Activated CD4-positive, alpha-beta T cell treated with anti-CD3 and anti-CD28 coated beads for 36 hours (primary cell): ENCODE measurements at regions of chrX and their contacts with region 1.

Region 1: DNA sequence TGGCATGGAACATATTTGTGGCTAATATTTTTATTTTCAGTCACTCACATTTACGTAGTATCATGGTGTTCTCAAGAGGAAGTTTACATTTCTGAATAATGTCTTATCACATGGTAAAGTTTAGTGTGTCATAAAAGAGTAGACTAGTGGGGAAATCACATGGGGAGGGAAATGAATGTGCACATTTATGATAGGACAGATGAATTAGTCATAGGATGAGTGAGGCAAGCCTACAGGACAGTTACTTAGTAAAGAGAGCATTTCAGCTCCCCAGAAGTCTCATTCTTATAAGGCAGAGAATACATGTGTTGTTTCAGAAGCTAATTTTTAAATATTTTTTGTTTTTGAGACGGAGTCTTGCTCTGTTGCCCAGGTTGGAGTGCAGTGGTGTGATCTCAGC is 6.2 kb downstream of the GK start:
- DNase-seq: no peak
- ATAC-seq: peak; percentile 77
- H3K4me3 Mint-ChIP-seq: peak overlapping the region; percentile 28
- H3K27ac Mint-ChIP-seq: peak overlapping the region; percentile 96
- H3K4me1 Mint-ChIP-seq: peaks cover 42% of the 10 kb centered on the region
- H3K27me3 Mint-ChIP-seq: no peaks in the 10 kb centered on the region

Region 2: DNA sequence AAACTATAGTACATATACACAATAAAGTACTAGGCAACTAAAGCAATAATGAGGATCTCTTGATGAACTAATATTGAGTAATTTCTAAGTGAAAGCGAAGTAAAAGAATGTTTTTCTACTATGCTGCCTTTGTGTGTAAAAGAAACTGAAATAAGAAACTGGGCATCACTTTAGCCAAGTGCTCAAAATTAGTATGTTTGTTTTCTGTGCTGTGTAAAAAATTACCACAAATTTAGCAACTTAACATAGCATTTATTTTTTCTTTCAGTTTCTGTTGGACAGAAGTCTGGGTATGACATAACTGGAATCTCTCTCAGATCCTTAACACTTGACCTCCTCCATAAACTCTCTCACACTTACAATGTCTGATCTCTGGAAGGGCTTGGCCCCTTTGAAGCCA is 1131.1 kb before region 1 on chrX:
- CTCF ChIA-PET with region 1: no interaction called
- POLR2A ChIA-PET with region 1: no interaction called
- intact Hi-C with region 1: no loop called
- DNase-seq: no peak
- ATAC-seq: no peak
- H3K4me3 Mint-ChIP-seq: no peak overlapping the region
- H3K27ac Mint-ChIP-seq: no peak overlapping the region
- H3K4me1 Mint-ChIP-seq: no peaks in the 10 kb centered on the region
- H3K27me3 Mint-ChIP-seq: no peaks in the 10 kb centered on the region

Region 3: DNA sequence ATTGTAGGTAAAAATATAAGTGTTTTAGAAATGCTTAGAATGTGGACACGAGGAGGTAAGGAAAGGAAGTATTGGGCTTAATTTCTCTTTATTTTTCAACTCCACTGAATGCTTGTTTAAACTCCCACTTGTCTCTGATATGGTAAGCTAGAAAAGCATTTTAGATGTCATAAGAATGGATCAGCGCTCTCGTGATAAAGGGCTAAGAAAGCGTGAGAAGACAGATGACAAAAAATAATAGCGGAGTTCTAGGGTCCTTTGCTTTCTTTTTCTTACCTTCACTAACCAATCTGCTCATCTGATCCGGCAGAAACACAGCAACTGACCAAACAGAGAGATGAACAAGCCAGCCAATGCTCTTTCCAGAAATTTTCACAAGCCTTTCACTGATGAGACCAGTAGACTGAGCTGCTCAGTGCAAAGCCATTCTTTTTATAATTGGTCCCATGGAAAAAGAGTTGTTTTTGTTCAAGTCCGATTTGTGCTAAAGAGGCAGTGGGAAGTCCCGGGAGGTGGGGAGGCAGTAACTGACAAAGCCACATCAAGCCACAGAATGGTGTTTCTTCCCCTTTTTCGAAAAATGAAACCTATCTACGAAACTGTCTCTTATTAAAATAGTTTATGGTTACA is 81.9 kb before region 1 on chrX and contains the start of gene TASL:
- CTCF ChIA-PET with region 1: no interaction called
- POLR2A ChIA-PET with region 1: no interaction called
- intact Hi-C with region 1: loop called (anchors 2 to 10 kb)
- DNase-seq: peak; percentile 39
- ATAC-seq: peak; percentile 89
- H3K4me3 Mint-ChIP-seq: peak within 1 kb of the TSS; percentile 80
- H3K27ac Mint-ChIP-seq: peak within 1 kb of the TSS; percentile 83
- H3K4me1 Mint-ChIP-seq: peaks cover 15% of the 10 kb centered on the region
- H3K27me3 Mint-ChIP-seq: no peaks in the 10 kb centered on the region
- total RNA-seq, gene TASL: 1.7 to 2.2 TPM

Region 4: GRCh38 chrX:30615229-30615628 is 44.2 kb before region 1 on chrX:
- CTCF ChIA-PET with region 1: no interaction called
- POLR2A ChIA-PET with region 1: no interaction called
- intact Hi-C with region 1: loop called in 1 of 2 experiments (anchors 5 kb)
- DNase-seq: no peak
- ATAC-seq: peak; percentile 100
- H3K4me3 Mint-ChIP-seq: no peak overlapping the region
- H3K27ac Mint-ChIP-seq: no peak overlapping the region
- H3K4me1 Mint-ChIP-seq: peaks cover 6% of the 10 kb centered on the region
- H3K27me3 Mint-ChIP-seq: peaks cover 1% of the 10 kb centered on the region

Region 5: GRCh38 chrX:30643313-30643821 is 16.1 kb before region 1 on chrX:
- CTCF ChIA-PET with region 1: interaction called, 15 read pairs
- POLR2A ChIA-PET with region 1: interaction called, 5 read pairs
- intact Hi-C with region 1: loop called in 1 of 2 experiments (anchors 1 kb)
- DNase-seq: no peak
- ATAC-seq: peak; percentile 72
- H3K4me3 Mint-ChIP-seq: no peak overlapping the region
- H3K27ac Mint-ChIP-seq: peak overlapping the region; percentile 88
- H3K4me1 Mint-ChIP-seq: peaks cover 28% of the 10 kb centered on the region
- H3K27me3 Mint-ChIP-seq: no peaks in the 10 kb centered on the region

Region 6: DNA sequence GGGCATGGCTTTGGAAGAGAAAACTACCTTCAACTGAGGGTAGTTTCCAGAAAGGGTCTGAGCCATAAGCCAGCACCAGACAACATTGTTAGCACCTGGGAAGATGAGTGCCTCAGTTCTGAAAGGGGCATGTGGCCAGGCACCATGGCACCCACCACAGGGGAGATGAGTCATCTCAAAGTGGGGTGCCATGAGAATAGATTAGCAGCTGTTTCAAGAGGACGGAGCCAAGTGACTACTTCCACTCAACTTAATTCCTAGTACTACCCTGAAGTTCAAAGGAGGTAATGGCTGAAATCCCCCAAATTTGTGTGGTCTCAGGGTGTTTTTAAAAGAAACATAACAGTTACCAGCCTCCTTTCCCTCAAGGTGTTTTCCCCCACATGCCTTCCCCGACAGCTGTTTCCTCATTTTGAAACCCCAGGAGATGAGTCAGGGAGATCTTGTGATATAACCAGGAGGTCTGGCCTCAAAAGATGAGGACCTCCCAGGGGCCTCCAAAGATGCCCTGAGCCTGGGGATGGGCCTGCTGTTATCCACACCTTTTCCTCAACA is 440.2 kb after region 1 on chrX:
- CTCF ChIA-PET with region 1: no interaction called
- POLR2A ChIA-PET with region 1: no interaction called
- intact Hi-C with region 1: loop called in 1 of 2 experiments (anchors 2 kb)
- DNase-seq: peak; percentile 75
- ATAC-seq: peak; percentile 94
- H3K4me3 Mint-ChIP-seq: no peak overlapping the region
- H3K27ac Mint-ChIP-seq: peak overlapping the region; percentile 60
- H3K4me1 Mint-ChIP-seq: peaks cover 11% of the 10 kb centered on the region
- H3K27me3 Mint-ChIP-seq: no peaks in the 10 kb centered on the region

Region 7: DNA sequence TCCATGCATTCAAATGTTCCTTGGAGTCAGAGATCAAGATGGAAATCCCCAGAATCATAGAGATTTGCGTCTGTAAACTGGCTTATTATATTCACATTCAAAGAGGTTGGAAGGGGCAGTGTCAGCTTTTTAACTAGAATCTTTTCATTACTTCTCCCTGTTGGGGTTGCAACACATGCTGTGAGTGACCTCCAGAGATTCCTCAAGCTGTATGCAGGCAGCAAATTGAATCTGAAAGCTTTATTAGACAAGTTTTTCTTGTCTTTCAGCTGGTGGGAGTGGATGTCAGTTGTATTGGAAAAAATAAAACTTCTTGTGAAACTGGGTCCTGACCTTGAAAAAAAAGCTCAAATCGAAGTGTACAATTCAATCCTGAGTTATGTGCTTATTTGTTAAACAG is 1148.9 kb after region 1 on chrX:
- CTCF ChIA-PET with region 1: no interaction called
- POLR2A ChIA-PET with region 1: no interaction called
- intact Hi-C with region 1: no loop called
- DNase-seq: no peak
- ATAC-seq: no peak
- H3K4me3 Mint-ChIP-seq: no peak overlapping the region
- H3K27ac Mint-ChIP-seq: no peak overlapping the region
- H3K4me1 Mint-ChIP-seq: no peaks in the 10 kb centered on the region
- H3K27me3 Mint-ChIP-seq: no peaks in the 10 kb centered on the region